Motor neuron (in vitro differentiated cells): ENCODE measurements at regions of chr2 and their contacts with region 1.

Region 1: DNA sequence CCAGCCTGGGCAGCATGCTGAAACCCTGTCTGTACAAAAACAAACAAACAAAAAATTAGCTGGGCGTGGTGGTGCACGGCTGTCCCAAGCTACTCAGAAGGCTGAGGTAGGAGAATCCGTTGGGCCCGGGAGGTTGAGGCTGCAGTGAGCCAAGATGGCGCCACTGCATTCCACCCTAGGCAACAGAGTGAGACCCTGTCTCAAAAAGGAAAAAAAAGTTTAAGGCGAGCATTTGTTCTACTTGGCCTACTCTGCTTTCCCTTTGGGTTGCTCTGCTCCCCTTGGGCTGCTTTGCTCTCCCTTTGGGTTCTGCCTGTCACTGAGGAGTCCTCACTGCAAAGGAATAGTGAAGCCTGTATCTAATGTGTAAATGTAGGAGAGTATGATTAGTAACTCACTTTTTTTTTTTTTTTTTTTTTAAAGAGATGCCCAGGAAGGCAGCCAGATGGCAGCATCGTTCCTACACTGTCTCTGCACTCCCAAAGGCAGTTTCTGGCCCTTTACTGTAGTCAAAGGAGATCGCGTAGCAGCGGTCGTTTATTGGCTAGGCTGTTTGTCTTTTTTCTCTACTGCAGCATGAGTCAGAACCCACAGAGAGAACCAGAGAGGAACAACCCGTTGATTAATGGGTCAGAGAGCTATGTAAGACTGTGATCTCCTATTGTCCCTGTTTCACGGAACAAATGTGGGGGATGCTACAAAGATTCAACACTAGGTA is 118.3 kb upstream of the CWC22 start:
- ATAC-seq: peak; percentile 77 to 100 (median 99)
- H3K4me3 ChIP-seq: no peak overlapping the region
- H3K27ac ChIP-seq: no peak overlapping the region
- H3K4me1 ChIP-seq: peaks cover 7 to 8% of the 10 kb centered on the region in 2 donors

Region 2: GRCh38 chr2:178397002-178397605 is 1728.3 kb before region 1 on chr2:
- in situ Hi-C with region 1: no loop called
- ATAC-seq: peak; percentile 50 to 81 (median 69)
- H3K4me3 ChIP-seq: no peak overlapping the region
- H3K27ac ChIP-seq: no peak overlapping the region
- H3K4me1 ChIP-seq: peaks cover 0 to 6% of the 10 kb centered on the region in 2 donors

Region 3: DNA sequence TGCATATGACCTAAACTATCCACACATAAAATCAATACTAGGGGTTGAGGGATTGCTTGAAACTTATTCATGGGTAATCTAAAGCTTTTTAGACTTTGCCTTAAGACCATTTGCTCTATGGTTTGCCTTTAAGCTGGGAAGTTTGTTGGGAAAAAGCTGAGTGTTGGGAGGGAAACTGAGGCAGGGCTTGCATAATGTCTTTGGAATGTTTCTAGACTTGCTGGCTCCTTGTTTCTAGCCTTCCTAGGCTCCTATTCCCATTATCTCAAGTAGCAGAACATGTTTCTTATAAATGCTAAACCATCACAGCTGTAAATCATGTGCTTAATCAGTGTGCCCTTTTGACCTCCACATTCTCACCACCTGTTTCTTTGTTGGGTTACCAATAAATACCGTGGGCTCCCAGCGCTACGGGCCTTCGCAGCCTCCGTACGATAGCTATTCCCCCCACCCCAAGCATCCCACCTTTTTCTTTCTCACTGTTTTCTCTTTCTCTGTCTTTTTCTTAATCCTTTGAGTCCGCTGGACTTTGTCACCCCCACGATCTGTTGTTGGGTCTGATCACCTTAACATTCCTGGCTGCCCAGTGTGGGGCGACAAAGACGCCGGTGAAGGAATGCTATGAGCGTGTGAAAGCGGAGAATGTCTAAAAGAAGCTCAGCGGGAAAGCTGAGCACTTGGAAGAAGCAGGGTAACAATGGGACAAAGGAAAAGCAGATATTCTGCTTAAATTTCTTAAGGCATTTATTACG is 68.9 kb before region 1 on chr2:
- in situ Hi-C with region 1: no loop called
- ATAC-seq: no peak
- H3K4me3 ChIP-seq: no peak overlapping the region
- H3K27ac ChIP-seq: no peak overlapping the region
- H3K4me1 ChIP-seq: peaks cover 0 to 11% of the 10 kb centered on the region in 2 donors

Region 4: DNA sequence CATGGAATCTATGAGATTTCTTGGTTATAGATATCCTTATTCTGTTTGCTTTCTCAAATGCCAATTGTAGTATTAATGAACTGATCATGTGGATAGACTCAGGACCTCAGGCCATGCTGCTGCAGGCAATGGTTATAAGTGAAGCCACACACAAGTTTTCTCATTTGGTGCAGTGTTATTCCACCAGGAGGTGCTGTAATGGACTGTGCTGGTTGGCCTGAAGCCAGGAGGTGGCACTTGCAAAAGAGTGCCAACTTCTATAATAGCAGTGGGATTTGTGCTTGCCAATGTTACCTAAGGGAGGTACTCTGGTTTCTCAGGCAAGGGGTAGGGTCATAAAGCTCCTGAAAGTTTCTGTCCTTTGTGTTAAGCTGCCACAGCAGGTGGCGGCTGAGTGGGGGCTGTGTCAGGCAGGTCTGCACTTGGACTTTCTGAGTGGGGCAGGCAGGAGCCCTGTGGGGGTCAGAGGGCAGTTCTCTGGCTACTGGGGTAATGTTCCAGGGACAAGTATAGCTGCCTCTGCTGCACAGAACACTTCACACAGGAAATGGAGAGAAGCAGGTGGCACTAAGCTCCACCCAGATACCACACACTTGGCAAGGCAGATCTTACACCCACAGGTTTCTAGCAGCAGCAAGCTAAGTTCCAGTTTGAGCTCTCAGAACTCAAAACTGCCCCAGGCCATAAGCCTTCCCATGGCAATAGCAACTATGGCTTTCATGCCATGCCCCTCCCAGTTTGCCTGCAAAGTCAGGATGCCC is 234.3 kb after region 1 on chr2:
- in situ Hi-C with region 1: loop called in 1 of 9 experiments (anchors 25 kb)
- ATAC-seq: no peak
- H3K4me3 ChIP-seq: no peak overlapping the region
- H3K27ac ChIP-seq: no peak overlapping the region
- H3K4me1 ChIP-seq: no peaks in the 10 kb centered on the region

Region 5: DNA sequence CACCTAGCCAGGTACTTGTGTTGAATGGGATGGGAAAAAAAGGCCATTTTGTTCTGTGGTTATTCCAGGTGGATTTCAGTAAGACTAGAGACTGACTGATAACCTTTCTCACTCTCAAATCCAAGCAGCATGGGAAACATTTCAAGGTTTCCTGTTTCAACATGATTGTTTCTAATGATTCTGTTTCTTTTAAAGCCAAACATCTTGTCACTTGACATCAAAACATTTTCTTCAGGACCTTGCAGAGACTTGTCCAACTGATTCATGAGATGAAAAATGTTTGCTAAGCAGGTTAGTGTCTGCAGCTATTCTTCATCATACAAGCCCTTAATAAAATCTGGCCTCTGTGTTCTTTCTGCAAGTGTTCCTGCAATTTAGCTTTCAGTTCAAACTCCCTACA is 338.2 kb after region 1 on chr2:
- in situ Hi-C with region 1: no loop called
- ATAC-seq: no peak
- H3K4me3 ChIP-seq: no peak overlapping the region
- H3K27ac ChIP-seq: no peak overlapping the region
- H3K4me1 ChIP-seq: peaks cover 0 to 2% of the 10 kb centered on the region in 2 donors

Region 6: DNA sequence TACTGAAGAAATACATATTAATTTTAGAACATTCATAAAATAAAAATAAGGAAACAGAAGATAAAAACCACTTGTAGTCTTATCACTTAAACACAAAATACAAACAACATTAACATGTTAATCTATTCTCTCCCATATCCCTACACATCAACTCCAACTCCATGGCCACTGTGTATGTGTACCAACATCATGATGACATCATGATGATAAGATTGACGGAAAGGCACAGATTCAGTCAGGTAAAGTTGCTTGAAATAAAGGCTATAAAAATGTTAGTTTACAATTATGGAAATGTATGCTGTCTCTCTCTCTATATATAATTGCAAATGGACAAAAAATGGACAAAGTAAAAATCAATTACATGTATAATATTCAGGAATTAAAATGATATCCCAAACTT is 466.5 kb after region 1 on chr2:
- in situ Hi-C with region 1: no loop called
- ATAC-seq: no peak
- H3K4me3 ChIP-seq: no peak overlapping the region
- H3K27ac ChIP-seq: no peak overlapping the region
- H3K4me1 ChIP-seq: no peaks in the 10 kb centered on the region

Region 7: GRCh38 chr2:181058378-181059269 is 933.2 kb after region 1 on chr2:
- in situ Hi-C with region 1: loop called in 2 of 9 experiments (anchors 25 kb)
- ATAC-seq: peak in 2 of 8 experiments; percentile 37 to 38
- H3K4me3 ChIP-seq: no peak overlapping the region
- H3K27ac ChIP-seq: no peak overlapping the region
- H3K4me1 ChIP-seq: no peaks in the 10 kb centered on the region

Region 8: DNA sequence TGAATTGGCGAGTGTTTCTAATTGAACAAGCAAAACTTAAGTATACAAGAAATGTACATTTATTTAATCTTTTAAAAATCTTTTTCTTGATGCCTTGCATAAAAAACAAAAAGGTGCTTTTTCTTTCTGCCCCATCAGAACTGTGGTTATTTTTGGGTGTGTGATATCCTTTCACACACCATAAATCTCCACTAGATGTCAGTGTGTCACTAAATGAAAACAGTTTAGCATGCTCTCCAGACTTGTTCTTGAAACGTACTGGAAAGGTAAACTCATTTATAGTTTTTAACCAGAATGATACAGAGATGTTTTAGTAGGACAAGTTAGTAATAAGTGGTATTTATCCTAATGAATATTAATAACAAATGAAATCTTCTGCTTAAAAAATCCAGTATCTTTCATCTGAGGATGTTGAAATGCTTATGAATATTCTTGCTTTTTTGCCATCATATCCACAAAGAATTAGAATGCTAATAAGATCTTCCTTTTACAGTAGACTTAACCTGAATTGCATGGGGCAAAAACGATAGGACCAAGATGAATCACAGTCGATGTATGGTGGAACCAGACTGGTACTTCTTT is 951.8 kb after region 1 on chr2:
- in situ Hi-C with region 1: loop called in 3 of 9 experiments (anchors 25 kb)
- ATAC-seq: peak in 7 of 8 experiments; percentile 46 to 87 (median 65)
- H3K4me3 ChIP-seq: no peak overlapping the region
- H3K27ac ChIP-seq: no peak overlapping the region
- H3K4me1 ChIP-seq: no peaks in the 10 kb centered on the region